ENCODE measurements at regions of chr12 and their contacts with region 1.

Region 1: DNA sequence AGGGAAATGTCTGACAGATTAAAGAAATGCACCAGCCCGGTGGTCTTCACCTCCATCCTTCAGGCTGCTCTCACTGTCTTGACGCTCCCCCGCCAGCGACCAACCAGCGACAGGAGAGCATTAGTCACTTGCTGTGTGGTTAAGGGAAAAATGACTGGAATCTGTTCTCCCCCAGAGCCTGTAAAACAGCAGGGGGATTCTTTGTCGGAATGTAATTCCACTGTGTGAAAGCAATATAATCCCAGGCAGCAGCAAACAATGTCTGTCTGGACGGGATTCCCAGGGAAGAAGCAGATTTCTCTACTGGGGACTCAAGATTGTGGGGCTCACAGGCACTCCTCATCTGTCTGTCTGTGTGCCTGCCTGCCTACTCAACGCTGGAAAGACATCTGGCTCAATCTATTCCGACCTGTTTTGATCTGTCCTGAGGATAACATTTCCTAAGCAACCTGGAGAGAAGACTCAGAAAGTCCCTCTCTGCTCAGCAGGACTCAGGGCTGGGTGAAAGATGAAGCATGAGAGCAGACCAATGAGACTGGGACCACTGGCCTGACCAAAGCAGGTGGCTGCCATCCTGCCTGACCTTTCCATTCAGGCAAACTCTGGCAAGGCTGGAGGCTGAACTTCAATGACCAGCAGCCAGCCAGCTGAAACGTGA is 54.6 kb downstream of the NUAK1 start:
- DNase-seq: no peak
- H3K4me3 ChIP-seq: peak overlapping the region in 29 of 59 donors; percentile 0 to 40 (median 16)
- H3K27ac ChIP-seq: peak overlapping the region; percentile 71 to 100 (median 97)
- H3K27me3 ChIP-seq: no peaks in the 10 kb centered on the region
- CTCF ChIP-seq: no peak

Region 2: GRCh38 chr12:106010741-106011140 is 73.4 kb before region 1 on chr12:
- intact Hi-C with region 1: no loop called
- DNase-seq: no peak
- H3K4me3 ChIP-seq: no peak overlapping the region
- H3K27ac ChIP-seq: peak overlapping the region in 6 of 59 donors; percentile 10 to 33 (median 16)
- H3K27me3 ChIP-seq: no peaks in the 10 kb centered on the region
- CTCF ChIP-seq: no peak

Region 3: GRCh38 chr12:106113824-106114446 is 29.8 kb after region 1 on chr12:
- intact Hi-C with region 1: loop called in 1 of 2 experiments (anchors 2 kb)
- DNase-seq: no peak
- H3K4me3 ChIP-seq: peak overlapping the region in 10 of 59 donors; percentile 1 to 21 (median 6)
- H3K27ac ChIP-seq: peak overlapping the region; percentile 23 to 93 (median 84)
- H3K27me3 ChIP-seq: no peaks in the 10 kb centered on the region
- CTCF ChIP-seq: no peak

Region 4: GRCh38 chr12:106128585-106129430 is 44.7 kb after region 1 on chr12:
- intact Hi-C with region 1: no loop called
- DNase-seq: no peak
- H3K4me3 ChIP-seq: peak overlapping the region in 3 of 59 donors; percentile 7 to 29 (median 10)
- H3K27ac ChIP-seq: peak overlapping the region in 53 of 59 donors; percentile 3 to 93 (median 59)
- H3K27me3 ChIP-seq: no peaks in the 10 kb centered on the region
- CTCF ChIP-seq: no peak

Region 5: DNA sequence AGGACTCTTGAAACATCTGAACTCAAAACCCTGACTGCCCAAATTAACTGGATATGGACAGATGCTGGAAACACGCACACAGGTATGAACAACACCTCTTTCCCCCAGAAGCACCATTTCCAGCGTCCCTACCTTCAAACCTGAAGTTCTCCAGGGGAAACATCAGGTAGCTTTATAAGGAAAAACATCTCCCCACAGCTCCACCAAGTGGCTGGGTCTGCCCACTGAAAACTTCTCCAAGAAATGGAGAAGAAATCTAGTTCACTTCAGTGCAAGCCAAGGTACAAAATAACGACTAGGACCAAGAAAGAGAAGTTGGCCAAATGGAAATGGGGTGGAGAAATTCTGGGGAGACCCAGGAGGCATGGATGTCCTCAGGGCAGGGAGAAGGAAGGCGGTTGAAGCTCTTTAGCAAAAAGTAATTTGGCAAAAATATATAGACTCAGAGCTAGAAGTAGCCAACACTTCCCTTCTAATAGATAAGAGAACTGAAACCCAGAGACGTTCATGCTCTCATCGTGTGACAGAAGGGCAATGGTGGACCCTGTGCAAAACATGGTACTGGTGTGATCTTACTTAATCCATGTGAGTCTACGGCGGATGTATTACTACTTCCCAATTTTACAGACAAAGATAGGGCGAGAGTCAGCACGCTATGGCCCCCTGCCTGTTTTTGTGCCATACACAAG is 65.1 kb after region 1 on chr12:
- intact Hi-C with region 1: no loop called
- DNase-seq: peak in 2 of 10 donors; percentile 33 to 40
- H3K4me3 ChIP-seq: no peak overlapping the region
- H3K27ac ChIP-seq: peak overlapping the region in 14 of 59 donors; percentile 3 to 74 (median 40)
- H3K27me3 ChIP-seq: no peaks in the 10 kb centered on the region
- CTCF ChIP-seq: peak in 55 of 56 donors; percentile 10 to 75 (median 53)

Region 6: DNA sequence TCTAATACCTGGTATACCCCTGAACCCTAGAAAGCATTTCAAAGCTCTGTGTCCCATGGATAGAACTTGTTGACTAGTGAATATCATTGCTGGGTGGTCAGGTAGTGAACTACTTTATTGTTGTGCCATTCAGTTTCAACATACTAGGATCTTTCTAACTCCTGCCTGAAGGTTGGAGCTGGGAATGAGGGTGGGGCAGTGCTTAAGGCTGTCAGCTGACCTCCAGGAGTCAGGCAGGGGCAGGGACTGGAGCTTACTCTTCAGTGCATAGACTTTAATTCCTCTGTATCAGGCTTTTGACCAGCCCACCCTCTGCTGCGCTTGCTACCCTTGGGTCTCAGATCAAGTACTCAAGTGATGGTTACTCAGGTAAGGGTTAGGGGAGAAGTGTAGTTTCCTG is 396.1 kb after region 1 on chr12:
- intact Hi-C with region 1: no loop called
- DNase-seq: no peak
- H3K4me3 ChIP-seq: no peak overlapping the region
- H3K27ac ChIP-seq: no peak overlapping the region
- H3K27me3 ChIP-seq: no peaks in the 10 kb centered on the region
- CTCF ChIP-seq: no peak

Measured in dorsolateral prefrontal cortex (tissue), 120 donors.